HEK293T (cell line): ENCODE measurements at regions of chr12 and their contacts with region 1.

Region 1: GRCh38 chr12:57865090-57865751 is 18.7 kb upstream of the CTDSP2 start:
- DNase-seq: peak; percentile 69

Region 2: GRCh38 chr12:57744777-57745484 is 120.3 kb before region 1 on chr12 and contains the start of gene TSPAN31:
- CTCF ChIA-PET with region 1: no interaction called
- POLR2A ChIA-PET with region 1: no interaction called
- DNase-seq: peak; percentile 92

Region 3: DNA sequence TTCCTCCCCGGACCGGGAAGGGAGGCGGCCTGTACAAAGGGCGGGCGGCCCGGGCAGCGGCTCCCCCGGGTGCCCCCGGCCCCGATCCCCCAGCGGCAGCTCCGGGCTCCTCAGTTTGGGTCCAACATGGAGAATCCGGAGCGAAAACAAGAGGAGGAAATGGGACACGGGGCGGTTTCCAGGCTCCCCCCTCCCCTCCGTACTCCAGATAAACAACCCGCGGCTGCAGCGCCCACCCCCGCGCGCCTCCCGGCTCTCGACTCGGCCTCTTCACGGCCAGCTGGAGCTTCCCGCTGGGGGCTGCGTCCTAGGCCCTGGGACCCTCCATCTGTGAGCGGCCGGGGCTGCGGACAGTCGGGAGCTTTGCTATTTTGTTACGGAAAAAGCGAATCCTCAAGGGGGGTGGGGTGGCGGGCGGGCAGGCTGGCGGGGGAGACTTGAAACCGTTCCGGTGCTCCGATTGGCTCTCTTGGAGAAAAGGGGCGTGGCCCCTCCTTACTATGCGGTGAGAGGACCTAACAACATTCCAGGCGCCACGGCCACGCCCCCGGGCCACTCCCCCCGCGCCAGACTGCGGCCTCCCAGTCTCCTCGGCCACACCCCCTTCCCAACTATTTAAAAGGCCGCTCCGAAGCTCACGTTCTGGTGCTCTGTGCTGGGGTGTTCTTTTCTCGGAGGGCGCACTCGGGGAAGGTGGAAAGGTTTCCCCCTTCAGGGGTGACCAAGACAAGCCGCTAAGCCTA is 18.5 kb before region 1 on chr12 and contains the start of gene CTDSP2:
- CTCF ChIA-PET with region 1: no interaction called
- POLR2A ChIA-PET with region 1: interaction called, 22 read pairs
- DNase-seq: peak; percentile 100

Region 4: GRCh38 chr12:57888409-57889157 is 23.4 kb after region 1 on chr12:
- CTCF ChIA-PET with region 1: no interaction called
- POLR2A ChIA-PET with region 1: interaction called, 32 read pairs
- DNase-seq: no peak